Colonic mucosa (tissue), 4 donors: ENCODE measurements at regions of chrX and their contacts with region 1.

Region 1: GRCh38 chrX:110853610-110854009 is 58.0 kb upstream of the CHRDL1 start:
- DNase-seq: no peak
- H3K4me3 ChIP-seq: no peak overlapping the region
- H3K27ac ChIP-seq: no peak overlapping the region
- H3K4me1 ChIP-seq: no peaks in the 10 kb centered on the region
- H3K27me3 ChIP-seq: no peaks in the 10 kb centered on the region
- CTCF ChIP-seq: no peak

Region 2: DNA sequence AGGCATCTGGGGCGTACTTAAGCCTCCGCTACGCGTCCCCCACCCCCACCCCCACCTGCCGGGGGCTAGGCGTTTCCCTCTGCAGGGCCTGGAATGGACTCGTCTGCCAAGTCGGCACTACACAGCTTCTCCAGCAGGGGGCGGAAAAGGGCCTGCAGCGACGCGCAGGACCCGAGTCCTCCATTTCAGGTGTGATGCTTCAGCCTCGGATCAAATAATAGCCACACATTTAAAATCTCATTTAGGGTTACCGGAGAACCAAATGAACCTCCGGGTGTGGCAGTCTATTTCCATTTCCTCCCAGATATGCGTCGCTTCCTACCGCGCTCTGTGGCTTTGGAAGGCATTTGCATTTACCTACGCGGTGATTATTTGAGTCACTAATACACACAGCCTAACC is 245.3 kb after region 1 on chrX:
- intact Hi-C with region 1: loop called (anchors 10 kb)
- DNase-seq: peak; percentile 53
- H3K4me3 ChIP-seq: no peak overlapping the region
- H3K27ac ChIP-seq: no peak overlapping the region
- H3K4me1 ChIP-seq: peaks cover 3% of the 10 kb centered on the region
- H3K27me3 ChIP-seq: peaks cover 7% of the 10 kb centered on the region
- CTCF ChIP-seq: peak; percentile 79

Region 3: DNA sequence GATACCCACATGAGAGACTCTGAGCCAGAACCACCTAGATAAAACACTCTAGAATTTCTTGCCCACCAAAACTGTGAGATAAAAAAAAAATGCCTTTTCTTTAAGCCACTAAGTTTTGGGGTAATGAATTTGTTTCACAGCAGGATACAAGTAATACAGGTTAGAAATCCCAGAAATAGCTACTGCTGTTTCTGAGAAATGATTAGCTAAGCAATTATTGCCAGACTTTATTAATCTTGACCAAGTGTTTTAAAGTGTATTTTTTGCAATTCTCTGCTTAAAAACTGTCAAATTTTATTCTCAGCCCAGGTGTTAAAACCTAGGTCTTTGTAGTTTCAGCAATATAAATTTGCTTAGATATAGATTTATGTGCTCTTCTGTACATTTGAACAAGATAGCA is 475.2 kb after region 1 on chrX:
- intact Hi-C with region 1: no loop called
- DNase-seq: no peak
- H3K4me3 ChIP-seq: no peak overlapping the region
- H3K27ac ChIP-seq: no peak overlapping the region
- H3K4me1 ChIP-seq: no peaks in the 10 kb centered on the region
- H3K27me3 ChIP-seq: no peaks in the 10 kb centered on the region
- CTCF ChIP-seq: no peak